ENCODE measurements at regions of chr6 and their contacts with region 1.

Region 1: DNA sequence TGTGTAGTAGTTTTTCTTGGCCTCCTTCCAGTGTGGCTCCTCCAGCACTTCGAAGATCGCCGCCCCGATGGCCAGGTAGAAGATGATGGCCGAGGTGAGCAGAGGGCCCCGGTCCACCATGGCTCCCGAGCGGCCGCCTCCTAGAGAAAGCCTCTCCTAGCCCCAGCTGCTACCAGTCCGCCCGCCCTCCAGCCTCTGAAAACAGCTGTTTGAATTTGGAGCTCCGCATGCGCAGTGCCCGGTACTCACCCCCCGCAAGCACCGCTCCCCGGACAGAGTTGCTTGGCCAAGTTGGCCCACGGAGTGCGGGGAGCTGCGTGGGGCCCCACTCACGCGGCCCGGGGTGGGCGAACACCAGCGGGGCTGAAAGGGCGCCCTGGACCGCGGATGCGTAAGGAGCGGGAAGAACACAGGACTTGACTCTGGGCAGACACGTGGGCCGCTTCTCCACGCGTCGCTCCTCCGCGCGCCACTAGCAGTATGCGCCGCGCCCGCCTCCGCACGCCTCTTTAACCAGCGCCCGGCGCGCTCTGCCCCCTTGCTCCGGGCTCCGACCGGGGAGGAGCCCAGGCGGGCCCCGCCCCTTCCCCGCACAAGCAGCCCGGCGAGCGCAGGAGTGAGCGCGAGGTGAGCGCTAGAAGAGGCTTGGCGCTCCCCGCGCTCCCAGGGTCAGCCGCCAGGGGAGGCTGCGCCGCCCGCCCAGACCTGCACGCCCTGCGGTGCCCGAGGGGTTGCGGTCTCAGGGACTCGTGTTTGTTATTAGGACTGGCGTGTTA is at the start of gene KCNK5:
- DNase-seq: peak; percentile 73 to 89
- H3K4me3 ChIP-seq: peak within 1 kb of the TSS; percentile 96
- H3K27ac ChIP-seq: peak within 1 kb of the TSS; percentile 34; the same call in 1 of the 2 replicates
- H3K4me1 ChIP-seq: peaks cover 39% of the 10 kb centered on the region
- H3K27me3 ChIP-seq: no peaks in the 10 kb centered on the region
- CTCF ChIP-seq: peak; percentile 86
- total RNA-seq, gene KCNK5: 11.9 and 14.3 TPM in 2 replicates

Region 2: DNA sequence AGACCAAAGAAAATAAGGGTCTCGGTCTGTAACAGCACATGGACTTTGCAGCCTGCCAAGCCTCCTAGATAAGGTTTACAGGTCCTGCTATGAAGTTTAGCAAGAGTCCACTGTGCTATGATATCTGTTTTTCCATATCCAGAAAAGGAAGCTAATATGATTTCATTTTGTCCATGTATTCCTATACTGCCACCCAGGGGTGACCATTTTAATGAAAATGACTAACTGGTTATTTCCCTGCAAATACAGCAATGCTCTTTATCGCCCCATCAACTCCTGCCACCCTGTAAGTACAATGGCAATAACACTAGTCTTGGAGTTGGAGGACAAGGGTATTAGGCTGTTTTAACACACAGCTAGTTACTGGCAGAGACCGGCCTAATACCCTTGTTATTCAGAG is 295.7 kb before region 1 on chr6:
- CTCF ChIA-PET with region 1: no interaction called
- POLR2A ChIA-PET with region 1: no interaction called
- intact Hi-C with region 1: no loop called
- DNase-seq: no peak
- H3K4me3 ChIP-seq: no peak overlapping the region
- H3K27ac ChIP-seq: no peak overlapping the region
- H3K4me1 ChIP-seq: no peaks in the 10 kb centered on the region
- H3K27me3 ChIP-seq: 0 out of 2 replicates have a peak, but pooled peaks cover 4% of the 10 kb centered on the region
- CTCF ChIP-seq: peak; percentile 60

Region 3: GRCh38 chr6:39062014-39062740 is 167.0 kb before region 1 on chr6:
- CTCF ChIA-PET with region 1: no interaction called
- POLR2A ChIA-PET with region 1: interaction called, 20 read pairs
- intact Hi-C with region 1: no loop called
- DNase-seq: no peak
- H3K4me3 ChIP-seq: no peak overlapping the region
- H3K27ac ChIP-seq: no peak overlapping the region
- H3K4me1 ChIP-seq: no peaks in the 10 kb centered on the region
- H3K27me3 ChIP-seq: peaks cover 99% of the 10 kb centered on the region
- CTCF ChIP-seq: no peak

Region 4: GRCh38 chr6:39214846-39215639 is 14.1 kb before region 1 on chr6:
- CTCF ChIA-PET with region 1: no interaction called
- POLR2A ChIA-PET with region 1: no interaction called
- intact Hi-C with region 1: loop called (anchors 1 kb)
- DNase-seq: peak; percentile 80 to 85
- H3K4me3 ChIP-seq: no peak overlapping the region
- H3K27ac ChIP-seq: 0 out of 2 replicates have a peak overlapping the region, but pooled peaks have one; percentile 41
- H3K4me1 ChIP-seq: peaks cover 68% of the 10 kb centered on the region
- H3K27me3 ChIP-seq: no peaks in the 10 kb centered on the region
- CTCF ChIP-seq: no peak

Region 5: GRCh38 chr6:39266375-39266774 is 37.2 kb after region 1 on chr6:
- CTCF ChIA-PET with region 1: no interaction called
- POLR2A ChIA-PET with region 1: no interaction called
- intact Hi-C with region 1: loop called (anchors 5 kb)
- DNase-seq: no peak
- H3K4me3 ChIP-seq: no peak overlapping the region
- H3K27ac ChIP-seq: no peak overlapping the region
- H3K4me1 ChIP-seq: peaks cover 59% of the 10 kb centered on the region
- H3K27me3 ChIP-seq: no peaks in the 10 kb centered on the region
- CTCF ChIP-seq: no peak

Region 6: DNA sequence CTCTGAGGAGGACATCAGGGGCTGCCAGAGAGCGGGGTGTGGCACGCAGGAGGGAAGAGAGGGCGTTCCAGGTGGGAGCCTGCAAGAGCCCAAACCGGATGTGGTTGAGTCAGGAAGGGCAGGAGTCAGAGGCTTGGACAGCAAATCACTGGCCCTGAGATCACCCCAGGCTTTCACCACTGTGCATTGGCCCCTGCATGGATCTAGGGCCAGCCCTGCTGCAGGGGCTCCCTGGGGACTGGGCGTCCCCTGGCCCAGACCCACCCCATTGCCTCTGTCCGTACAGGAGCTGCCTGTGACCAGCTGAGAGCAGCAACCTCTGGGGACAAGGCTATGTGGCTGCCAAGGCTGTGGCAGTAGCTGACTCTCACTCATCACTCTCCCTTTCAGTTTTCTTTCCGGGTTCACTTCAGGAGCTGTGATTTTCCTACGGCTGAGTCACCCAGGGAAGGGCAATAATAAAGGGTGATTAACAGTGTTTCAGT is 51.1 kb after region 1 on chr6:
- CTCF ChIA-PET with region 1: no interaction called
- POLR2A ChIA-PET with region 1: interaction called, 6 read pairs
- intact Hi-C with region 1: loop called (anchors 5 kb)
- DNase-seq: peak; percentile 82 to 95
- H3K4me3 ChIP-seq: peak overlapping the region; percentile 9; the same call in 1 of the 2 replicates
- H3K27ac ChIP-seq: peak overlapping the region; percentile 94
- H3K4me1 ChIP-seq: peaks cover 43% of the 10 kb centered on the region
- H3K27me3 ChIP-seq: no peaks in the 10 kb centered on the region
- CTCF ChIP-seq: no peak

Region 7: GRCh38 chr6:39377539-39377950 is 148.4 kb after region 1 on chr6:
- CTCF ChIA-PET with region 1: no interaction called
- POLR2A ChIA-PET with region 1: no interaction called
- intact Hi-C with region 1: no loop called
- DNase-seq: peak in 1 of 2 experiments; percentile 46
- H3K4me3 ChIP-seq: no peak overlapping the region
- H3K27ac ChIP-seq: no peak overlapping the region
- H3K4me1 ChIP-seq: no peaks in the 10 kb centered on the region
- H3K27me3 ChIP-seq: peaks cover 57% of the 10 kb centered on the region
- CTCF ChIP-seq: peak; percentile 63

Measured in PC-9 (cell line).